Activated B cell treated with CpG ODN at 0.5 μM for 24 hours (primary cell): ENCODE measurements at regions of chr1 and their contacts with region 1.

Region 1: GRCh38 chr1:92817986-92818764 is 13.7 kb upstream of the RPL5 start:
- DNase-seq: no peak
- ATAC-seq: peak; percentile 61
- H3K4me3 Mint-ChIP-seq: no peak overlapping the region
- H3K27ac Mint-ChIP-seq: no peak overlapping the region
- H3K4me1 Mint-ChIP-seq: peaks cover 2% of the 10 kb centered on the region
- H3K27me3 Mint-ChIP-seq: peaks cover 1% of the 10 kb centered on the region
- CTCF ChIP-seq: no peak

Region 2: GRCh38 chr1:91997607-91998195 is 820.5 kb before region 1 on chr1:
- CTCF ChIA-PET with region 1: interaction called, 8 read pairs
- POLR2A ChIA-PET with region 1: no interaction called
- intact Hi-C with region 1: loop called (anchors 1 kb)
- DNase-seq: no peak
- ATAC-seq: no peak
- H3K4me3 Mint-ChIP-seq: no peak overlapping the region
- H3K27ac Mint-ChIP-seq: no peak overlapping the region
- H3K4me1 Mint-ChIP-seq: no peaks in the 10 kb centered on the region
- H3K27me3 Mint-ChIP-seq: no peaks in the 10 kb centered on the region
- CTCF ChIP-seq: no peak

Region 3: GRCh38 chr1:92310185-92310597 is 508.0 kb before region 1 on chr1:
- CTCF ChIA-PET with region 1: interaction called, 14 read pairs
- POLR2A ChIA-PET with region 1: no interaction called
- intact Hi-C with region 1: loop called (anchors 2 kb)
- DNase-seq: no peak
- ATAC-seq: peak; percentile 37
- H3K4me3 Mint-ChIP-seq: no peak overlapping the region
- H3K27ac Mint-ChIP-seq: no peak overlapping the region
- H3K4me1 Mint-ChIP-seq: no peaks in the 10 kb centered on the region
- H3K27me3 Mint-ChIP-seq: no peaks in the 10 kb centered on the region
- CTCF ChIP-seq: no peak

Region 4: GRCh38 chr1:92736395-92736794 is 81.8 kb before region 1 on chr1:
- CTCF ChIA-PET with region 1: no interaction called
- POLR2A ChIA-PET with region 1: no interaction called
- intact Hi-C with region 1: no loop called
- DNase-seq: no peak
- ATAC-seq: peak; percentile 41
- H3K4me3 Mint-ChIP-seq: no peak overlapping the region
- H3K27ac Mint-ChIP-seq: no peak overlapping the region
- H3K4me1 Mint-ChIP-seq: peaks cover 36% of the 10 kb centered on the region
- H3K27me3 Mint-ChIP-seq: no peaks in the 10 kb centered on the region
- CTCF ChIP-seq: no peak

Region 5: DNA sequence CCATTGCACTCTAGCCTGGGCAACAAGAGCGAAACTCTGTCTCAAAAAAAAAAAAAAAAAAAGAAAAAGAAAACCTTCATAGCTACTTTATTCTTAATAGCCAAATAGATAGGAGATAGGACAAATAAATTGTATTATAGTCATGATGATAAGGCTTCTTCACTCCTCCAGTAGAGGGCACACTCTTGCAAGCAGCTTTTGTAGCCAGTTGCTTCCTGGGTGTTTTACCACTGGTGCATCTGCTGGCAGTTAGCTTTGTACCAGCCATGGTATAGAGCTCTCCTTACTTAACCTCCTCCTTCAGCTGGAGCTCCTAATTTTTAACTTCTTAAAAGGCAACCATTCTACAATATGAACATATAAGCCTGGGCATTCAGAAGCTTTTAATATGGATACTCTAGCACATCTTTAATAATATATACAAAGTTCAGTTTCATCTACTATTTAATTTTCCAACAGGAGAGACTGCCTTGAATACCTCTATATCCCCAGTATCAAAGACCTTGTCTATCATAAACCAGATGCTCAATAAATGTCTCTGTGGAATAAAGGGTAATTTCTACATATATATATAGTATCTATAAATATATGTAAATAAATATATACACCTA is 69.0 kb before region 1 on chr1:
- CTCF ChIA-PET with region 1: interaction called, 92 read pairs
- POLR2A ChIA-PET with region 1: interaction called, 4 read pairs
- intact Hi-C with region 1: loop called (anchors 1 kb)
- DNase-seq: no peak
- ATAC-seq: peak; percentile 79
- H3K4me3 Mint-ChIP-seq: no peak overlapping the region
- H3K27ac Mint-ChIP-seq: no peak overlapping the region
- H3K4me1 Mint-ChIP-seq: no peaks in the 10 kb centered on the region
- H3K27me3 Mint-ChIP-seq: no peaks in the 10 kb centered on the region
- CTCF ChIP-seq: peak; percentile 32

Region 6: GRCh38 chr1:92929461-92929860 is 111.3 kb after region 1 on chr1:
- CTCF ChIA-PET with region 1: no interaction called
- POLR2A ChIA-PET with region 1: no interaction called
- intact Hi-C with region 1: no loop called
- DNase-seq: no peak
- ATAC-seq: peak; percentile 50
- H3K4me3 Mint-ChIP-seq: peak overlapping the region; percentile 62
- H3K27ac Mint-ChIP-seq: peak overlapping the region; percentile 80
- H3K4me1 Mint-ChIP-seq: peaks cover 83% of the 10 kb centered on the region
- H3K27me3 Mint-ChIP-seq: no peaks in the 10 kb centered on the region
- CTCF ChIP-seq: no peak